ENCODE measurements at regions of chr17 and their contacts with region 1.

Region 1: GRCh38 chr17:27879987-27880608 is 13.1 kb downstream of the LYRM9 start:
- DNase-seq: peak; percentile 44 to 91 (median 77)

Region 2: GRCh38 chr17:27760069-27760885 is 119.8 kb before region 1 on chr17:
- intact Hi-C with region 1: loop called (anchors 10 kb)
- DNase-seq: peak in 41 of 42 donors; percentile 16 to 90 (median 74)

Region 3: DNA sequence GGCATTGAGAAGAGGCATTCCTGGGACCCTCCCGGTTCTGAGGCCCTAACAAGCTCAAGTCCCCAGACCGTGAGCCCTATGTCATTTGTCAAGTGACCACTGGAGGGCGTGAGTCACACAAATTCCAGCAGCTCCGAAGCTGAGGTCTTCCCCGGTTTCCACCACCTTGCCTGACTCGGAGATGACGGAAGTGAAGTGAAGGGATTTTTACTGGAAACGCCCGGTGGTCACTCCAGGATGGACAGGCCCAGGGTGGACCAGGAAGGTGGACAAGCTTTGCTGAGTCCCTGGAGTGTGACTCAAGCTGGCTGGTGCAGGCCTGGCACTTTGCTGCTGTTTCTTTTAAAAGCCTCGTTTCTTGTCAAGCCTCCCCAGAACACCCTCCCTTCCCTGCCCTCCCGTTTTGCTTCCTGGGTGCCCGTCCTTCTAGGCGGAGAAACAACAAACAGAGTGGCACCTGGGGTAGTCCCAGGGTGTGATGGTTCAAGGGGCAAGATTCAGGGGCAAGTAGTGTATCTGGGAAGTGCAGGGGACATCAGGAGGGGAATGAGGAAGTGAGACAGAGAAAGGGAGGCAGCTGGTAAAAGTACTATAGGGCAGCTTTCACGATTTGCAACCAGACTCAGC is 74.5 kb before region 1 on chr17:
- intact Hi-C with region 1: loop called (anchors 5 kb)
- DNase-seq: peak; percentile 67 to 93 (median 86)

Region 4: DNA sequence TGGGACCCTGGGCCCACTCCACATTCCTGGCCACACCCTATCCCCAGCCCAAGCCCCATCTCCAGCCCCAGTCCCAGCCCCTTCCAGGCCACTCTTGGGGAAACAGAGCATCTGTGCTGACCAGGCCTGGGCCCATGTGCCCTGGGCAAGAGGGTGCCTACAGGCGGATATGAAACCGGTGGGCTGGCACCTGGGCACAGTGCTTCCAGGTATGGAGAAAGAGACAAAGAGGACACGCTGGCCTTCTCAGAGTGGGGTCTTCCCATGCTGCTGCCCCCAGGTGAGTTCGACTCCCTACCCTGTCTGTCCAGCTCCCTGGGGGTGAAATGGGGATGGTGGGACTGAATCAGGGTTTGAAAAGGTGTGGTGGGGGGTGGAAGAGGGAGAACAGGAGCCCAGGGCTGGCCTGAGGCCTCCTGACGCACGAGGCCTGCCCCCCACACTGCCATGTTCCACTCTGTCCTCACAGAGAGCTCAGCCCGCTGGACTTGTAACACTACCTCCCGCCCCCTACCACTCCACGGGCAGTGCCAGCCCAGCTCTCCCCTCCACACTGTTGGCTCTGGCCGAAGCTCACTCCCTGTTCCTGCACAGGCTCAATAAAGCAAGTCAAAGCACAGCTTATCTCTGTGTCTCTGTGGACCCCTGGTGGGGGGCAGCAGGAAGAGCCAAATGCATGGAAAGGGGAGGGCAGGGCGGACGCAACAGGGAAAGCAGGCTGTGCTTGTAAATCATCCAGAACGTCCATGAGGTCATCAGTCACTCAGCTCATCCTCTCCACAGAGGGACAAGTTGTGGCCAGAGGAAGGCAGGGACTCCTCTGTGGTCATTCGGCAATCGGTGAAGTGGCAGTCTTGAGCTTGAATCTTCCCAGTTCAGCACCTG is 367.8 kb after region 1 on chr17:
- intact Hi-C with region 1: loop called (anchors 10 kb)
- DNase-seq: no peak

Measured in head of caudate nucleus (tissue), 42 donors.